ENCODE measurements at regions of chr17 and their contacts with region 1.

Region 1: GRCh38 chr17:81959362-81960129 is 1.4 kb downstream of the NOTUM start:
- DNase-seq: no peak
- H3K4me3 ChIP-seq: peak overlapping the region; percentile 24; the same call in 1 of the 2 replicates
- CTCF ChIP-seq: peak; percentile 80

Region 2: GRCh38 chr17:81948635-81949378 is 10.7 kb before region 1 on chr17:
- CTCF ChIA-PET with region 1: interaction called, 33 read pairs
- POLR2A ChIA-PET with region 1: no interaction called
- DNase-seq: no peak
- H3K4me3 ChIP-seq: no peak overlapping the region
- CTCF ChIP-seq: no peak

Region 3: GRCh38 chr17:81991684-81992305 is 32.2 kb after region 1 on chr17:
- CTCF ChIA-PET with region 1: interaction called, 13 read pairs
- POLR2A ChIA-PET with region 1: no interaction called
- DNase-seq: no peak
- H3K4me3 ChIP-seq: peak overlapping the region; percentile 6
- CTCF ChIP-seq: no peak

Region 4: GRCh38 chr17:82013341-82013740 is 53.8 kb after region 1 on chr17:
- CTCF ChIA-PET with region 1: interaction called, 290 read pairs
- POLR2A ChIA-PET with region 1: no interaction called
- DNase-seq: no peak
- H3K4me3 ChIP-seq: no peak overlapping the region
- CTCF ChIP-seq: no peak

Region 5: DNA sequence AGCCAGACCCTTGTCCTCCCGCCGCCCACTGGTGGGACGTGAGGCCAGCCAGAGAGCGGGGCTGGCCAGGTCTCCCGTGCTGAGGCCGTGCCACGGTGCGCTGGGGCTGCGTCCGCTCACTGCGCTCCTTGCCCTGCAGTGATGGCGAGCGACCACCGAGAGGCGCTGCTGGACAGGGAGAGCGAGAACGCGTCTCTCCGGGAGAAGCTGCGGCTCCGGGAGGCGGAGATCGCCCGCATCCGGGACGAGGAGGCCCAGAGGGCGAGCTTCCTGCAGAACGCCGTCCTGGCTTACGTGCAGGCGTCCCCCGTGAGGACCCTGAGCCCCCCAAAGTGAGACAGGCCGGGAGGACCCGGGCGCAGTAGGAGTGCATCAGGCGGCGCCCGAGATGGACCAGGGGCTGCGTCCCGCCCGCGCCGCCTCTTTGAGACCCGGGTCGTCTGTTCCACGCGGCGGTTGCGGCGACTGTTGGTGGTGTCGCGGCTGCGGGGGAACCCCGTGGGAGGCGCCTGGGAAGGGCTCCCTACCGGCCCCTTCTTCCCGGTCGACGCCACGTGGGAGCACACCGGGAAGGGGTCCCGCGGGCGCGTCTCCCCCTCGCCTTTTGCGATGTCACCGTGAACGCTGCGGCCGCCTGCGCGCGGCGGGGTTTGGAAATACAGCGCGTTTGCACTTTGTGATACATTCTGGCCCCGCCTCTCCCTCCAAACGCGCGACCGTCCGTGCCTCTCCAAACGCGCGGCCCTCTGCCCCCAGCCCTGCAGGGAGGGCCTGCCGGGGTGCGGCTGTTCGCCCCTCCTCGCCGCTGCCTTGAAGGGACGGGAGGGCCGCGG is 71.1 kb after region 1 on chr17:
- CTCF ChIA-PET with region 1: interaction called, 39 read pairs
- POLR2A ChIA-PET with region 1: interaction called, 3 read pairs
- DNase-seq: no peak
- H3K4me3 ChIP-seq: peak overlapping the region; percentile 55
- CTCF ChIP-seq: peak; percentile 96

Region 6: DNA sequence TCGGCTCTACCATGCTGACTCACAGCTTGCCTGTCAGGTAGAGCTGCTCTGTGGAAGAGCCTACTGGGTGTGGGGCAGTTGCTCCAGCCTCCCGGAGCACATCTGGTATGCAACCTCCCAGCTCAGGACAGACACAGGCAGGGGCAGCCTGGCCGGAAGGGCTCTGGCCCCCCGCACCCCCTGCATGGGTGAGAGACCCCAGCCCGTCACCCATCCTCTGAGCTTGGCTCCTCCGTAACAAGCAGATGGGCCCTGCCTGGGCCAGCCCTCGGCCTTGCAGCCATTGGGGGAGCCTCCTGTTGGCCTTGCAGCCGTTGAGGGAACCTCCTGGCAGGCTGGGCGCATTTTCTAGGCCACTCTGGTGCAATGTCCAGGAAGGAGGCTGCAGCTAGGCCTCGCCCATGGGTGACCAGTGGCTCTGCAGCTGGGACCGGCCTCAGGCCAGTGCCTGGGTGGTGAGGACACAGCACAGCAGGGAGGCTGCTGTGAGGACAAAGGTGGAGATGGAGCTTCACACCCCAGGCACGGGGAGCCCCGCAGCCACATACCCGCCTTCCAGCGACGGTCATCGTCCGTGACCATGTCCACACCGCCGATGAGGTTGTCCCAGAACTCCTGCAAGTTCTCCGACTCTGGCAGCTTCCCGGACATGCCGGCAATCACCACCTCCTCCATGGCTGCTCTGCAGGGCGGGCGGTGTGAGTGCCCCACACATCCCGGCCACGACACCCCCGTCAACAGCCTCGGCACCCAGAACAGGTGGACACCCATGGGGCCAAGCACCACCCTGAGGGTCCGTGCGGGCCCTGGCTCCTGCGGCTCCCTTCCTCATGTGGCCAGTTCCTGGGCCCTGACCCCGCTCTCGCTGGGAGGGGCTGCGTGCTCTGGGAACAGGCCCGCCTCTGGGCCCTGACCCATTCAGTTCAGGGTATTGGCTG is 136.5 kb after region 1 on chr17:
- CTCF ChIA-PET with region 1: no interaction called
- POLR2A ChIA-PET with region 1: no interaction called
- DNase-seq: no peak
- H3K4me3 ChIP-seq: peak overlapping the region; percentile 70
- CTCF ChIP-seq: no peak

Measured in AG04449 (cell line).